HepG2 (cell line): ENCODE measurements at regions of chr10 and their contacts with region 1.

Region 1: DNA sequence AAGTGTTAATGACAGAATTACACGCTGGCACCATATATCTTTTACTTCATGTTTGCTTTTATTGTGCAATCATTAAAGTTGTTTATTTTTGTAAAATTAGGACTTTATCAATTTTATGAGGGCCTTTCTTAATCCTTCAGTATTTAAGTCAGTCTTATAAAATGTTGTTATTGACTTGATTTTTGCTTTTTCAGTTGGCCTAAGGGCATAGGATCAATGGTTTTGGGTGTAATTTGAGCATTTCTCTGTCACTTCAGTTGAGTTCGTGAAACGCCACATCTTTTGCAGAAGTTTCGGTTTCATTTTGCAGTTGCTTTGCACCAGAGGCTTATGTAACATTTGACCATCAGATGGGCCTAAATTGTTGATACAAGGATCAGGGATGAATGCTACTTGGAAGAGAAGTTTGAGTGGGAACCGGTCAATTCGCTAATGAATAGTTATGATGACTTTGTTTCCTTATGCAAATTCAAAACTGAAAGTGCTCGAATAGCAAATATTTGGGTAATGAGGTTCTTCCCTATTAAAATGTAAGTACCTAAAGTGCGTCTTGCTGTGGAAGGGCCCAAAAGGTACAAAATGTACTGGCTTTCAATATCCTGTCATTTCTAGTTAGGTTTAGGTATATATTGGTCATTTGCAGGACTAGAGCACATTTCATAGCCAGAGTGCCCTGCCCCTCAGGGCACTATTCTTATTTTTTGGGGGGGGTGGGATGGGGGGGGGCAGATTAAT is 340.9 kb downstream of the LRMDA start:
- DNase-seq: no peak
- ATAC-seq: no peak
- H3K4me3 ChIP-seq: no peak overlapping the region
- H3K27ac ChIP-seq: peak overlapping the region; percentile 13
- H3K4me1 ChIP-seq: peaks cover 69% of the 10 kb centered on the region
- H3K27me3 ChIP-seq: no peaks in the 10 kb centered on the region
- CTCF ChIP-seq: no peak
- EP300 ChIP-seq: no peak
- POLR2A ChIP-seq: no peak
- RAD21 ChIP-seq: no peak

Region 2: GRCh38 chr10:74530981-74531380 is 1241.3 kb before region 1 on chr10:
- CTCF ChIA-PET with region 1: no interaction called
- POLR2A ChIA-PET with region 1: no interaction called
- in situ Hi-C with region 1: no loop called
- intact Hi-C with region 1: no loop called
- DNase-seq: no peak
- ATAC-seq: no peak
- H3K4me3 ChIP-seq: no peak overlapping the region
- H3K27ac ChIP-seq: no peak overlapping the region
- H3K4me1 ChIP-seq: no peaks in the 10 kb centered on the region
- H3K27me3 ChIP-seq: no peaks in the 10 kb centered on the region
- CTCF ChIP-seq: no peak
- EP300 ChIP-seq: no peak
- POLR2A ChIP-seq: no peak
- RAD21 ChIP-seq: no peak

Region 3: DNA sequence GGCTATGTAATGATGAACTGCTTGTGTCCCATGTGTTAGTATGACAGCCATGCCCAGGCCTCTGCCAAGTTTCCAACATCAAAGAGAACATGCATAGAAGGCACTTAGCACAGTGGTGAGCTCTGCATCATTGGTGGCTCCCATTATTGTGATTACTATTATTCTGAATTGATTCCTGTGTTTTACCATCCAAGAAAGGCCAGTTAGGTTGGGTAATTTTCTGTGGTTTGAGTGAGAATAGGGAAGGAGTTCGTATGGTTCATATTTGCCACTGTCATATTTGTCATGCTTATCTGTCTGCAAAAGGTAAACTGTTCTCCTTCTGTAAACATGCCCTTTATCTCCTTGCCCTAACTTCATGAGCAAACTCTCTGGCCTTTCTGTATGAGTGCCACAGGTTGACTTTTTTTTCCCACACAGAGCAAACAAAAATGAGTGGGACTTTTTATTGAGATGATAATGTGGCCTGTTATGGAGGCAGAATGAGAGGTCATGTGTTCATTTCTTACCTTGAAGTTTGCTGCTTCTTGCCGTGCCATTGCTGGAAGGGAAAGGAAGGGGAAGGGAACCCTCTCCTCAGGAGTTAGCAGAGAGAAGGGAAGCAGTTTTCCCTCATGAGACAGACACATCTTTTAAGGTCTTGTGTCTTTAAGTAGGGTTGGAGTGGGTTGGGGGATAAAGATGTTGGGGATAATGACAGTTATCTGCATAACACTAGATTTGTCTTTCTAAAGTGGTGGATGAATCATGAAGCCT is 39.0 kb before region 1 on chr10:
- CTCF ChIA-PET with region 1: no interaction called
- POLR2A ChIA-PET with region 1: interaction called, 6 read pairs
- in situ Hi-C with region 1: no loop called
- intact Hi-C with region 1: loop called (anchors 5 kb)
- DNase-seq: peak; percentile 95
- ATAC-seq: peak; percentile 98
- H3K4me3 ChIP-seq: no peak overlapping the region
- H3K27ac ChIP-seq: peak overlapping the region; percentile 56
- H3K4me1 ChIP-seq: peaks cover 55% of the 10 kb centered on the region
- H3K27me3 ChIP-seq: no peaks in the 10 kb centered on the region
- CTCF ChIP-seq: no peak
- EP300 ChIP-seq: peak in 1 of 2 experiments; percentile 98; a peak in 3 of 4 replicates
- POLR2A ChIP-seq: no peak
- RAD21 ChIP-seq: no peak; the same call in 1 of the 2 replicates

Region 4: DNA sequence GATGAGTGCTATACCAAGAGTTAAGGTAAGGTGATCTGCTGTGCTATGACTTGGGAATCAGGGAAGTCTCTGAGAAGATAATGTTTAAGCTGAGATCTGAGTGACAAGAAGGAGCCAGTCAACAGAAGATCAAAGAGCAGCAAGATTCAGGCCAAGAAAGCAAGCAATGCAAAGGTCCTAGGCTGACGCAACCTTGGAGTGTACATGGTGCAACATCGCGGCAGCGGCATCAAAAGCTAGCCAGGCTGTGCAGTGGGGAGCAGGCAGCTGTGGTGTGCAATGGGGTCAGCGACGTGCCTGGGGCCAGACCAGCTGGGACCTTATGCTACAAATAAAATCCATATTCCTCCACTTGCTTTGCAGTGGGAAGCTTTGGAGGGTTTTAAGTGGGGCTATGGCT is 16.8 kb before region 1 on chr10:
- CTCF ChIA-PET with region 1: no interaction called
- POLR2A ChIA-PET with region 1: interaction called, 27 read pairs
- in situ Hi-C with region 1: no loop called
- intact Hi-C with region 1: no loop called
- DNase-seq: peak; percentile 69
- ATAC-seq: peak; percentile 99
- H3K4me3 ChIP-seq: no peak overlapping the region
- H3K27ac ChIP-seq: peak overlapping the region; percentile 61
- H3K4me1 ChIP-seq: peaks cover 43% of the 10 kb centered on the region
- H3K27me3 ChIP-seq: no peaks in the 10 kb centered on the region
- CTCF ChIP-seq: no peak
- EP300 ChIP-seq: peak in 1 of 2 experiments; percentile 95; a peak in 2 of 4 replicates
- POLR2A ChIP-seq: 0 out of 4 replicates have a peak, but pooled peaks of 1 of the 2 experiments have one; percentile 42
- RAD21 ChIP-seq: no peak

Region 5: DNA sequence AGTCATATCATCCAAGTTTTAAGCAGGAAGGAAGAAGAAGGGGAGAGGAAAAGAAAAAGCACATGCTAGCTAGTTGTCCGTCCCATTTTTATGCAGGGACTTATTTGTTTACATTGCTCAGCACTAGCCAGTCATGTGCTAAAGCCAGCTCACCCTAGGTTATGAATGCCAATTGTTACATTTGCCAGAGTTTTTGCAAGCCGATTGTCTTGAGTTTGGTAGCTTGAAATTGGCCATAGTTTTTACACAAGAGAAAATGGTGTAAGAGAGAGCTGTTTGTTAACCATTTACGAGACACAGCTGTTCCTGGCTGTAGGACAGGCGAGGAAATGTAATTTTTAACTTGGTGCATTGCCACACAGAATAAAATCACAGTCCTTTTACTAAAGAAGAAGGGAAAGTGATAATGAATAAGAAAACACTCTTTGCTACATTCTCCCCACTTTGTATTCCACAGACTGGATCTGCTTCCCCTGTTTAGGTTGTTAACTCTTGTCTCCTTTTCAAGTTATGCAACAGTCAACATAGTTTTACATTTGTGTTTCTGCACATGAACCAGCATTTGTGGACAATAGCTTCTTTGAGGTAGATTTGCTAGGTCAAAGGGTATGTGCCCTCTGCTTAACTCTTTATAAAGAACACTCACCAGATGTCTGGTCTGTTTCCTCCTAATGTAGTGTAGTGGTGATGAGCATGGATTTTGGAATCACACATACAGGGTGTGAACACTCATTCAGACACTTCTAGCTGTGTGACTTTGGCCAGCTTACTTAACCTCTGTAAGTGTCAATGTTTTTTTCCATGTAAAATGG is 16.3 kb after region 1 on chr10:
- CTCF ChIA-PET with region 1: no interaction called
- POLR2A ChIA-PET with region 1: interaction called, 111 read pairs
- in situ Hi-C with region 1: no loop called
- intact Hi-C with region 1: no loop called
- DNase-seq: peak; percentile 94
- ATAC-seq: peak; percentile 88
- H3K4me3 ChIP-seq: peak overlapping the region in 2 of 3 experiments; percentile 21 to 42; a peak in 2 of 6 replicates
- H3K27ac ChIP-seq: peak overlapping the region; percentile 85
- H3K4me1 ChIP-seq: peaks cover 58% of the 10 kb centered on the region
- H3K27me3 ChIP-seq: no peaks in the 10 kb centered on the region
- CTCF ChIP-seq: no peak
- EP300 ChIP-seq: peak; percentile 45 to 87; a peak in 2 of 4 replicates
- POLR2A ChIP-seq: no peak
- RAD21 ChIP-seq: no peak; the same call in 1 of the 2 replicates

Region 6: DNA sequence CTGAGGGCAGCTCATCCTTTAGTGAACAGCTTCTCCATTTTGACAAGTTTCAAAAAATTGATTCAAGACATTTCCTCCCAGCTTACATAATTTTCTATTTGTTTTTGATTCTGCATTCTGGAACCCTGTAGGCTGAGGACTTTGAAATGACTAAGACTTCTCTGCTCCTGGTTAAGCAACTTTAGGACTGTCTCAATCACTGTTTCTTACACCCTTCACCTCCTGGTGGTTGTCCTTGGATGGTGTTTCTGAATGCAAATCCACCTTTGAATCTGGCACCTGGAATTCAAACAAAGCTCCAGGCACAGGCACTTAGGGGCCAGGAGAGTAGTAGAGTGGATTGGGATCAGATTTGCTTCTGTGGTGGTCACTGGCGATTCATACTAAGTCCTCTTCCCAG is 254.6 kb after region 1 on chr10:
- CTCF ChIA-PET with region 1: no interaction called
- POLR2A ChIA-PET with region 1: interaction called, 21 read pairs
- in situ Hi-C with region 1: loop called (anchors 10 kb)
- intact Hi-C with region 1: loop called (anchors 2 kb)
- DNase-seq: no peak
- ATAC-seq: no peak
- H3K4me3 ChIP-seq: no peak overlapping the region
- H3K27ac ChIP-seq: peak overlapping the region; percentile 92
- H3K4me1 ChIP-seq: peaks cover 97% of the 10 kb centered on the region
- H3K27me3 ChIP-seq: no peaks in the 10 kb centered on the region
- CTCF ChIP-seq: peak; percentile 26; the same call in 1 of the 2 replicates
- EP300 ChIP-seq: no peak; a peak in 1 of 4 replicates
- POLR2A ChIP-seq: peak in 1 of 2 experiments; percentile 5; a peak in 1 of 4 replicates
- RAD21 ChIP-seq: no peak

Region 7: DNA sequence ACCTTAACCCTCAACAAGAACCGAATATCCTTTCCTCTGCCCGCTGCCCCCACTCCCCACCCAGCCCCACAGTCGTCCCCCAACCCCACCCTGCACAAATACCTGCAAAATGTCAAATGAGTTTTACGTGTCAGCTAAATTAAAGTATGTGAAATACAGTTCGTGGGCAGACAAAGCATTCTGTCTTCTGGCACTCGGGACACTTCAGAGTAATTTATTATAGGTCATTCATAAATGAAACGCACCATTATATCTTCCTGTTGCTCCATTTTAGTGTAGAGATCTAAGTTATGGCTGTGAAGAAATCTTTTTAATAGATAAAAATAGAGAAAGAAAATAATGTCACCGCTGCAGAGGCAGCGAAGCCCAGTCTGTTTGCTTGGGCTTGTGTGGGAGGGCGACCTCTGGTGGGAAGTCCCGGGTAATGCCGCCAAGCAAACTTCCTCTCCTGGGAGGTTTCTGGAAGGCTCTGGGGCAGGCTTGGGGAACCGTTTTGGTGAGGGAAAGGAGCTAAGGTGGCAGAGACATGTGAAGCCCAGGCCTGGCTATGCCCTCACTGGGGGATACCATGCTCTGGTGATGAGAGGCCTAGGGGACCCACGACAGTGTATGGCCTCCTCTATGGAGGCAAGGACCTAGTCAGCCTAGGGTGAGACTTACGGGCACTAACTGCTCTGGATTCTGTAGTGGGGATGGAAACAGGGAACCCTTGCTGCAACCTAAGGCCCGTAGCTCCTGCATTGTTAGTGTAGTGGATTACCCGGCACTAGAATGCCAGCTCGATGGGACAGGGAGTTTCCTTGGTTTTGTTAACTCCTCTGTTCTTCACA is 264.0 kb after region 1 on chr10:
- CTCF ChIA-PET with region 1: no interaction called
- POLR2A ChIA-PET with region 1: interaction called, 21 read pairs
- in situ Hi-C with region 1: loop called (anchors 10 kb)
- intact Hi-C with region 1: loop called (anchors 2 kb)
- DNase-seq: no peak
- ATAC-seq: 0 out of 3 replicates have a peak, but pooled peaks have one; percentile 15
- H3K4me3 ChIP-seq: no peak overlapping the region
- H3K27ac ChIP-seq: peak overlapping the region; percentile 97
- H3K4me1 ChIP-seq: peaks cover 57% of the 10 kb centered on the region
- H3K27me3 ChIP-seq: no peaks in the 10 kb centered on the region; a peak in 1 of 5 replicates
- CTCF ChIP-seq: peak; percentile 85
- EP300 ChIP-seq: no peak
- POLR2A ChIP-seq: no peak
- RAD21 ChIP-seq: peak; percentile 79